Activated naive CD4-positive, alpha-beta T cell treated with anti-CD3 and anti-CD28 coated beads for 36 hours (primary cell): ENCODE measurements at regions of chr3 and their contacts with region 1.

Region 1: DNA sequence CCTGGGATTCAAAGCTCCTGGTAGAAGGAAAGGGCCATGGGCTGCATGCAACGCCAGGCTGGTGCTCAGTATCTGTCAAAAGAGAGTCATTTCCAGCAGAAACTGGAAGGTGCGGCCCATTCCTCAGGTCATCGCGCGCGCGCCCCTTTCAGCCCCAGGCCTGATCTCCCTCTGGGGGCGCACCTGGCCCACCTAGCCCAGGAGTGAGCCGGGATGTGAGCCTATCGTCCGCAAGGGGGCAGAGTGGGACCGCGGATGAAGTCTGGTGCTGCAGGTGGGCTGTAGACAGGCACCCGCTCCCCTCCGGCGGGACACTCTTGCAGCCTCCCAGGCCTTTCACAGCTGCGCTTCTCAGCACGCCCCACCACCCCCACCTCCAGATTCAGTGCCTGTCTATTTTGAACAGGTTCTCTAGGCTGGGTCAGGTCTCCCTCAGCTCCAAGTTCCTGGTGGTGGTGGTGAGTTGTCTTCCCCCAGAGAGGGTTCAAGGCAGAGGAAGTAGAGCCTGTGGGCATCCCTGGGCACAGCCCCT is 5.8 kb upstream of the RPL29 start:
- DNase-seq: peak; percentile 87
- H3K4me3 Mint-ChIP-seq: no peak overlapping the region
- H3K27ac Mint-ChIP-seq: no peak overlapping the region
- H3K4me1 Mint-ChIP-seq: peaks cover 9% of the 10 kb centered on the region
- H3K27me3 Mint-ChIP-seq: no peaks in the 10 kb centered on the region

Region 2: GRCh38 chr3:51819709-51820406 is 181.7 kb before region 1 on chr3:
- CTCF ChIA-PET with region 1: no interaction called
- intact Hi-C with region 1: no loop called
- DNase-seq: peak; percentile 32
- H3K4me3 Mint-ChIP-seq: no peak overlapping the region
- H3K27ac Mint-ChIP-seq: no peak overlapping the region
- H3K4me1 Mint-ChIP-seq: no peaks in the 10 kb centered on the region
- H3K27me3 Mint-ChIP-seq: peaks cover 18% of the 10 kb centered on the region

Region 3: GRCh38 chr3:52013802-52014598 is 12.5 kb after region 1 on chr3:
- CTCF ChIA-PET with region 1: interaction called, 19 read pairs
- intact Hi-C with region 1: no loop called
- DNase-seq: no peak
- H3K4me3 Mint-ChIP-seq: no peak overlapping the region
- H3K27ac Mint-ChIP-seq: no peak overlapping the region
- H3K4me1 Mint-ChIP-seq: no peaks in the 10 kb centered on the region
- H3K27me3 Mint-ChIP-seq: no peaks in the 10 kb centered on the region

Region 4: DNA sequence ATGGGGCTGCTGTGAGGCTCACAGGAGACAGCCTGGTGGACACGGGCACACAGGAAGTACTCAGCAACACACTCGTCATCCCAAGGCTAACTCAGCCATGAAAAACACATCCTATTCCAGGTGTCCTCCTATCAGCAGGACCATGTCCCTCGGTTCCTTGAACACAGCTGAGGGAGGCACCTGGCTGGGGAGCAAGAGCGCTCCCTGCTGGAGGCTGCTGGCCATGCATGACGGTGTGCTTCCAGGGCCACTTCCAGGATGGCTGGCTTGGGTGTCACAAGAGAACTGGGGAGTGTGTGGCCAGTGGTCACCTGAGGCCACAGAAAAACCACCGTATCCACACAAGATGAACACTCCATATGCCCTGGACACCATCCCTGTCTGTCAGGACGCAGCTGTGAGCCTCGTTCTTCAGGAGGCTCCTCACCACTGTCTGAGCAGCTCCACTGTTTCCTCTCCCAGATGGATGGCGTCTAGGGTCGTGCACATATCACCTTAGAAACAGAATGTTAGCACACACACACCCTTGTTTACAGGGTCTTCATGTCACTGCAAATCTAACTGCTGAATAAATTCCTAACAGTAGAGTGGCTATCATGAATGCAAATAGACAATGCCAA is 121.7 kb after region 1 on chr3:
- CTCF ChIA-PET with region 1: interaction called, 22 read pairs
- intact Hi-C with region 1: loop called (anchors 1 kb)
- DNase-seq: peak; percentile 73
- H3K4me3 Mint-ChIP-seq: no peak overlapping the region
- H3K27ac Mint-ChIP-seq: no peak overlapping the region
- H3K4me1 Mint-ChIP-seq: peaks cover 3% of the 10 kb centered on the region
- H3K27me3 Mint-ChIP-seq: no peaks in the 10 kb centered on the region

Region 5: GRCh38 chr3:52144034-52144795 is 142.7 kb after region 1 on chr3:
- CTCF ChIA-PET with region 1: interaction called, 77 read pairs
- intact Hi-C with region 1: loop called (anchors 1 kb)
- DNase-seq: peak; percentile 86
- H3K4me3 Mint-ChIP-seq: no peak overlapping the region
- H3K27ac Mint-ChIP-seq: no peak overlapping the region
- H3K4me1 Mint-ChIP-seq: peaks cover 4% of the 10 kb centered on the region
- H3K27me3 Mint-ChIP-seq: no peaks in the 10 kb centered on the region